Mammary epithelial cell (primary cell): ENCODE measurements at regions of chr12 and their contacts with region 1.

Region 1: GRCh38 chr12:54126696-54127537 is 61.9 kb downstream of the SMUG1 start:
- DNase-seq: peak; percentile 36
- H3K4me3 ChIP-seq: peak overlapping the region; percentile 59 to 73 (median 63)
- H3K27ac ChIP-seq: no peak overlapping the region
- H3K4me1 ChIP-seq: peaks cover 9% of the 10 kb centered on the region
- H3K27me3 ChIP-seq: no peaks in the 10 kb centered on the region
- CTCF ChIP-seq: no peak

Region 2: GRCh38 chr12:54017878-54018467 is 108.9 kb before region 1 on chr12:
- CTCF ChIA-PET with region 1: no interaction called
- dilution Hi-C with region 1: no loop called
- in situ Hi-C with region 1: no loop called
- intact Hi-C with region 1: loop called (anchors 1 kb)
- DNase-seq: peak; percentile 93
- H3K4me3 ChIP-seq: peak overlapping the region; percentile 63 to 87 (median 69)
- H3K27ac ChIP-seq: peak overlapping the region; percentile 90
- H3K4me1 ChIP-seq: peaks cover 49% of the 10 kb centered on the region
- H3K27me3 ChIP-seq: no peaks in the 10 kb centered on the region
- CTCF ChIP-seq: no peak

Region 3: GRCh38 chr12:54053751-54054741 is 72.9 kb before region 1 on chr12 and contains the start of gene HOXC4:
- CTCF ChIA-PET with region 1: no interaction called
- dilution Hi-C with region 1: no loop called
- in situ Hi-C with region 1: no loop called
- intact Hi-C with region 1: loop called (anchors 5 kb)
- DNase-seq: no peak
- H3K4me3 ChIP-seq: peak within 1 kb of the TSS; percentile 64 to 71 (median 65)
- H3K27ac ChIP-seq: peak within 1 kb of the TSS; percentile 24
- H3K4me1 ChIP-seq: peaks cover 26% of the 10 kb centered on the region
- H3K27me3 ChIP-seq: no peaks in the 10 kb centered on the region
- CTCF ChIP-seq: no peak
- total RNA-seq, gene HOXC4: 0.83 to 11.9 TPM

Region 4: GRCh38 chr12:54216797-54217661 is 90.1 kb after region 1 on chr12:
- CTCF ChIA-PET with region 1: no interaction called
- dilution Hi-C with region 1: no loop called
- in situ Hi-C with region 1: no loop called
- intact Hi-C with region 1: no loop called
- DNase-seq: peak; percentile 78
- H3K4me3 ChIP-seq: peak overlapping the region in 2 of 3 experiments; percentile 21 to 36
- H3K27ac ChIP-seq: peak overlapping the region; percentile 9
- H3K4me1 ChIP-seq: peaks cover 28% of the 10 kb centered on the region
- H3K27me3 ChIP-seq: no peaks in the 10 kb centered on the region
- CTCF ChIP-seq: peak; percentile 39 to 79

Region 5: GRCh38 chr12:54286042-54286850 is 159.3 kb after region 1 on chr12:
- CTCF ChIA-PET with region 1: interaction called, 14 read pairs
- dilution Hi-C with region 1: no loop called
- in situ Hi-C with region 1: no loop called
- intact Hi-C with region 1: no loop called
- DNase-seq: peak; percentile 53
- H3K4me3 ChIP-seq: no peak overlapping the region
- H3K27ac ChIP-seq: no peak overlapping the region
- H3K4me1 ChIP-seq: peaks cover 23% of the 10 kb centered on the region
- H3K27me3 ChIP-seq: no peaks in the 10 kb centered on the region
- CTCF ChIP-seq: no peak